Gastrocnemius medialis (tissue), 4 donors: ENCODE measurements at regions of chr20 and their contacts with region 1.

Region 1: DNA sequence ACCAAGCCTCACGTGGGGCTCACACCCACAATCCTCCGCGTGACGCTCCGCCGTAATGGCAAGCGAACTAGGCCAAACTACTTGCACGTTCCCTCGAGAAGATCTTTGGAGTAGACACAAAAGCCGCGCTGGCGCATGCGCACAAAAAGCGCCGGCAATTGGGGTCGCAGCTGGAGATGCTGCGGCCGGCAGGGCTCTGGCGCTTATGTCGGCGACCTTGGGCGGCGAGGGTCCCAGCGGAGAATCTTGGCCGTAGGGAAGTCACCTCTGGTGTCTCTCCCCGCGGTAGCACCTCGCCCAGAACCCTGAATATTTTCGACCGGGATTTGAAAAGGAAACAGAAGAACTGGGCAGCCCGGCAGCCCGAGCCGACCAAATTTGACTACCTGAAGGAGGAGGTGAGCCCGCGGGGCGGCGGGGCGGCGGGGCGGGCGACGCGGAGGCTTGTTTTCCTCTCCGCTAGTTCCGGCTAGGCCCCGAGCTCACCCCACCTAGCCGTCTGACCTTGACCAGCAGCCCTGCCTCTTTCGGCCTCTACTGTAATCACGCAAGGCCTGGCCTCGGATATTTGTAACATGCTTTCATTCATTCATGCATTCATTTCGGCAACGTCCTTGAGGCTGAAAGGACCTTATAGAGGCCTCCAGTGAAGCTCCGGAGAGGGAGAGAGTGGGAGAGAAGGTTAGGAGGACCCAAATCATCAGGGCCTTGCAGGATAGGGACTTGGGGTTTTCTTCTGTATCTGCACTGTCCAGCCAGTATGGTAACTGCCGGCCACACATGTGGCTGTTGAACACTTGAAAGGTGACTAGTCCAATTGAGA is at the starts of genes ESF1 and NDUFAF5:
- DNase-seq: peak; percentile 92 to 96
- ATAC-seq: peak; percentile 98 to 99
- H3K4me3 ChIP-seq: peak within 1 kb of the TSS; percentile 87 to 99 (median 96)
- H3K27ac ChIP-seq: peak within 1 kb of the TSS; percentile 94 to 99 (median 97)
- H3K4me1 ChIP-seq: peaks cover 29 to 36% of the 10 kb centered on the region in 2 donors
- H3K27me3 ChIP-seq: no peaks in the 10 kb centered on the region
- CTCF ChIP-seq: peak in 1 of 5 experiments; percentile 35
- POLR2A ChIP-seq: peak; percentile 62 to 70
- total RNA-seq, gene ESF1: 8.6 to 12.2 (median 10.8) TPM
- total RNA-seq, gene NDUFAF5: 14.5 to 33.6 (median 16.8) TPM

Region 2: DNA sequence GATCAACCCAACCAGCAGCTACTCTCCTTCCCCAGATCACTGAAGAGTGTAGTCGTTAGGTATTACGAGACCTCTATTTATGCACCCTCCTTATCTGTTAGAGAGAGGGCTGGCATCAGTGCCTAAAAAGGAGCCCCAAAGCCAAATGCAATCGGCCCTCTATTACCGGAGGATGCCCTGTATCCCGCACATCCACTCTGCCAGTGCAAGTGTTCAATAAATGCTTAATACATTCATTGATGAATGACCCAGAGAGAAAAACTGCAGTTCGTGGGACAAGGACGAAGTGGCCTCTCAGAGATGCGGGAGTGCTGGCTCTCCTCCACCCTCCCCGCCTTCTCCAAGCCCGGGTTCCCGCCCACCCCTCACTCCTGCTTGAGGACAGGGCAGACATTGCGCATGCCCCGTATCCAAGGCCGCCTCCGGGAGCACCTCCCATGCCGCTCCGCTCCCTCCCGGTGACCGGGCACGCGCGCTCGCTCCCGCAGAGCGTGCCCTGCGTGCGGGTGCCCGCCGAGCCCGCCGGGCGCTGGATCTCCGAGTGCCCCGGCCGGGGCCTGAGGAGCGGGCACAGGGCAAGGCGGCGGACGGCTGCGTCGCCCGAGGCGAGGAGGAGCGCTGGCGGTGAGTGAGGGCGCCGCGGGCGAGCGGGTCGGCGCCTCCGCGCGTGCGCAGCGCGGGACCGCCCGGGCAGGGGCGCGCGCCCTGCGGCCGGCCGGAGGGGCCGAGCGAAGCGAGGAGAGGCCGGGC is 1894.6 kb before region 1 on chr20:
- in situ Hi-C with region 1: no loop called
- intact Hi-C with region 1: loop called (anchors 5 kb)
- DNase-seq: peak; percentile 76 to 80
- ATAC-seq: peak; percentile 84 to 89
- H3K4me3 ChIP-seq: peak overlapping the region; percentile 72 to 86 (median 80)
- H3K27ac ChIP-seq: peak overlapping the region; percentile 83 to 95 (median 88)
- H3K4me1 ChIP-seq: peaks cover 36 to 38% of the 10 kb centered on the region in 2 donors
- H3K27me3 ChIP-seq: no peaks in the 10 kb centered on the region
- CTCF ChIP-seq: peak in 2 of 5 experiments; percentile 11 to 23
- POLR2A ChIP-seq: peak; percentile 71

Region 3: DNA sequence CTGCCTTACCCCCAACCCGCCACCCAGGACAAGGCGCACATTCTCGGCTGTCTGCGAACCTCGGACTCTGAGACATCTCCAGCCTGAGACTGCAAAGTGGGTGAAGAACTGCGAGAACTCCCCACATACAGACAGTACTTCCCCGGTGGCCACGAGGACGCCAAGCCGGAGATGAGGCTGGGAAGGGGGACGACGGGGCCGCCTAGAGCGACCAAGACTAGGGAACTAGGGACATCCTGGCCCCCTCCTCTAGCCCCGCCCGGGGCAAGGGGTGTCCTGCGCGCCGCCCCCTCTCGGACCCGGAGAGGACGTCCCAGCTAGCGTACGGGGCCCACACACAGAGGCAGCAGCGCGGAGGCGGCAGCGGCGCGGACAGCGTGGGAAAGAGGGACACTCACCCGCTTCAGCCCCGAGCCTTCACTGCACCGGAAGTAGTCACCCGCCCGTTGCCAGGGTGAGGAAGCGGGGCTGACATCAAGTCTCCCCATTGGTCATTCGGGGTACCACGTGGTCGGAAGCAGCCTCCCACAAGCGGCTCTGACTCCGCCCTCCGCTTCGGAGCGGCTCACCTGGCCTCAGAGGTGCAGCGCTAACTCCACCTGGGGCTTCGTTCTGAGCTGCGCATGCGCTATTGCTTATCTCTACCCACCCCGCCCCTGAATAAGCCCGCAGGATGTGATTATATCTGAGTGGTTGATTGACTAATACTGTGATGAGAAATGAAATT is 146.4 kb before region 1 on chr20 and contains the start of gene TASP1:
- in situ Hi-C with region 1: no loop called
- intact Hi-C with region 1: loop called (anchors 2 kb)
- DNase-seq: peak; percentile 92 to 93
- ATAC-seq: peak; percentile 100
- H3K4me3 ChIP-seq: peak within 1 kb of the TSS; percentile 91 to 99 (median 94)
- H3K27ac ChIP-seq: peak within 1 kb of the TSS; percentile 69 to 75 (median 71)
- H3K4me1 ChIP-seq: peaks cover 5 to 15% of the 10 kb centered on the region in 2 donors
- H3K27me3 ChIP-seq: no peaks in the 10 kb centered on the region
- CTCF ChIP-seq: no peak
- POLR2A ChIP-seq: peak in 1 of 2 donors; percentile 50
- total RNA-seq, gene TASP1: 1.7 to 4.2 (median 2.7) TPM

Region 4: DNA sequence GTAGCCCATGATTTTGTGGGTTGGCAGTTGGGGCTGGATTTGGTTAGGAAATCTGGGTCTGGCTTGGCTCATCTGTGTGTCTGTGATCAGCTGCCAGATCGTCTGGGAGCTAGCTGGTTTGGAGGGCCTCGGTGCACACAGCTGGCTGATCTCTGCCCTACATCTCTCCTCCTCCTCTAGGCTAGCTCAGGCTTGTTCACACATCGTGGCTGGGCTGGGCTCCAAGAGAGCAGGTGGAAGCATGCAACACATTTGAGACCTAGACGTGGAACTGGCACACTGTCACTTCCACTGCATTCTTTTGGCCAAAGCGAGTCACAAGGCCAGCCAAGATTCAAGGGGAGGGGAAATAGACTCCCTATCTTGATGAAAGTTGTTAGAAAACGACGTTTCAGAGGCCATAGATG is 15.6 kb after region 1 on chr20:
- in situ Hi-C with region 1: no loop called
- intact Hi-C with region 1: loop called (anchors 1 kb)
- DNase-seq: peak; percentile 91 to 98
- ATAC-seq: peak; percentile 99 to 100
- H3K4me3 ChIP-seq: no peak overlapping the region
- H3K27ac ChIP-seq: peak overlapping the region; percentile 63 to 78 (median 68)
- H3K4me1 ChIP-seq: peaks cover 15 to 22% of the 10 kb centered on the region in 2 donors
- H3K27me3 ChIP-seq: no peaks in the 10 kb centered on the region
- CTCF ChIP-seq: no peak
- POLR2A ChIP-seq: no peak